ENCODE measurements at regions of chr1 and their contacts with region 1.

Region 1: GRCh38 chr1:17485280-17485679 is 45.8 kb upstream of the RCC2 start:
- DNase-seq: no peak
- H3K4me3 ChIP-seq: no peak overlapping the region
- H3K27ac ChIP-seq: no peak overlapping the region
- H3K4me1 ChIP-seq: peaks cover 7% of the 10 kb centered on the region
- H3K27me3 ChIP-seq: no peaks in the 10 kb centered on the region
- CTCF ChIP-seq: peak; percentile 40 to 53

Region 2: GRCh38 chr1:17236779-17237560 is 248.3 kb before region 1 on chr1:
- CTCF ChIA-PET with region 1: no interaction called
- dilution Hi-C with region 1: no loop called
- in situ Hi-C with region 1: no loop called
- intact Hi-C with region 1: no loop called
- DNase-seq: peak; percentile 83
- H3K4me3 ChIP-seq: no peak overlapping the region
- H3K27ac ChIP-seq: no peak overlapping the region
- H3K4me1 ChIP-seq: peaks cover 37% of the 10 kb centered on the region
- H3K27me3 ChIP-seq: no peaks in the 10 kb centered on the region
- CTCF ChIP-seq: peak; percentile 78 to 79

Region 3: DNA sequence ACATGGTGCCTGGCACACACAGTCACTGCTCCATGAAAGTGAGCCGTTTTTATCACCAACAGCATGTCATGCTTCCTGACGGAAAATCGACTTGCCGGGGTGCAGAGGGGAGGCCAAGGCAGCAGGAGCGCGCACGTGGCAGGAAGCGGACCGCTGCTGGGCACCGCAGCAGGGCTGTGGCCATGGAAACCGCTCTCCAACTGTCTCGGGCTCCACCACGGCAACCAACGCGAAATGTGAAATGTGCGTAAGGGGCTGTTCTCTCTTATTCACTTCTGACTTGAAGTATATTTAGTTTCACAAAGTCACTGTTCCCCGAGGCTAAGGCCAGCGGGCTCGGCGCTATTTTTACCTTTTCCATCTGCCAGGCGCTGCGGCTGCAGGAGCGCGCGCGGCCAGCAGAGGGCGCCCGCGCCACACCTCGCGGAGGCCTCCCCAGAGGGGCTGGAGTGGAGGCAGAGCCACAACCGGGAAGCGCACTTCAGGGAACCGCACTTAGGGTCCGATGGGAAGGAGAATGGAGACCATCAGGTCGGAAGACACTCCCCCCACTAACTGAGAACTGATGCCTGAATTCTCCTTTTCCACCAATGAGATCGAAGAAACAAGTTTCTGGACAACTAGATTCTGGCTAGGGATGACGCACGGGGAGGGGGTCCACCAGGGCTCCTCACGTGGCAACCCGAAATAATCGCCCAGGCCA is 65.5 kb before region 1 on chr1:
- CTCF ChIA-PET with region 1: no interaction called
- dilution Hi-C with region 1: loop called (anchors 10 kb)
- in situ Hi-C with region 1: loop called in 1 of 2 experiments (anchors 10 kb)
- intact Hi-C with region 1: loop called (anchors 1 kb)
- DNase-seq: peak; percentile 30
- H3K4me3 ChIP-seq: no peak overlapping the region
- H3K27ac ChIP-seq: no peak overlapping the region
- H3K4me1 ChIP-seq: no peaks in the 10 kb centered on the region
- H3K27me3 ChIP-seq: no peaks in the 10 kb centered on the region
- CTCF ChIP-seq: peak; percentile 83 to 99

Region 4: DNA sequence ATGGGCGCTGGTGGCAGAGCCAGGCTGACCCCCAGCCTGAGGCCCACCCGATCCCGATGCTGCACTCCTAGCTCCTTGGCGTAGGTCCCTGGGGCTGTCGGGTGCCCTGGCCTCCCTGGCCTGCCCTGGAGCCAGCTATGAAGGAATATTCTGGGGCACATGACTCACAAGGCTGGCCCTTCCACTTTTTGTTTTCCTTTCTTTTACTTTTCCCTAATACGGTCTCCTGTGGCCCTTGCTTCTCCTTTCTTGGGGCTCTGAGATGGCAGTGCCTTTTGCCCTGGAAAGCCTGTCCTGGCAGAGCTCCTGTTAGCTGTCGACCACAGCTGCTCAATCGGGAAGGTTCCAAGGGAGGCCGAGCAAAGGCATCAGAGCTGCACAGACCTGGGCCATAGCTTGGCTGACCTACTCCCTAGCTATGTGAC is 76.3 kb after region 1 on chr1:
- CTCF ChIA-PET with region 1: no interaction called
- dilution Hi-C with region 1: no loop called
- in situ Hi-C with region 1: no loop called
- intact Hi-C with region 1: no loop called
- DNase-seq: no peak
- H3K4me3 ChIP-seq: no peak overlapping the region
- H3K27ac ChIP-seq: no peak overlapping the region
- H3K4me1 ChIP-seq: peaks cover 14% of the 10 kb centered on the region
- H3K27me3 ChIP-seq: no peaks in the 10 kb centered on the region
- CTCF ChIP-seq: no peak

Region 5: GRCh38 chr1:18149027-18149641 is 663.9 kb after region 1 on chr1:
- CTCF ChIA-PET with region 1: no interaction called
- dilution Hi-C with region 1: no loop called
- in situ Hi-C with region 1: no loop called
- intact Hi-C with region 1: no loop called
- DNase-seq: no peak
- H3K4me3 ChIP-seq: no peak overlapping the region
- H3K27ac ChIP-seq: no peak overlapping the region
- H3K4me1 ChIP-seq: no peaks in the 10 kb centered on the region
- H3K27me3 ChIP-seq: no peaks in the 10 kb centered on the region
- CTCF ChIP-seq: no peak

Measured in mammary epithelial cell (primary cell).